Right cardiac atrium (tissue), 5 donors: ENCODE measurements at regions of chr3 and their contacts with region 1.

Region 1: GRCh38 chr3:30606301-30607031 is at the start of gene TGFBR2:
- DNase-seq: peak; percentile 97 to 98 (median 98)
- ATAC-seq: peak; percentile 98
- H3K4me3 ChIP-seq: peak within 1 kb of the TSS; percentile 94
- H3K27ac ChIP-seq: peak within 1 kb of the TSS; percentile 98
- H3K4me1 ChIP-seq: peaks cover 5% of the 10 kb centered on the region
- H3K27me3 ChIP-seq: no peaks in the 10 kb centered on the region
- total RNA-seq, gene TGFBR2: 196 to 255 (median 212) TPM

Region 2: DNA sequence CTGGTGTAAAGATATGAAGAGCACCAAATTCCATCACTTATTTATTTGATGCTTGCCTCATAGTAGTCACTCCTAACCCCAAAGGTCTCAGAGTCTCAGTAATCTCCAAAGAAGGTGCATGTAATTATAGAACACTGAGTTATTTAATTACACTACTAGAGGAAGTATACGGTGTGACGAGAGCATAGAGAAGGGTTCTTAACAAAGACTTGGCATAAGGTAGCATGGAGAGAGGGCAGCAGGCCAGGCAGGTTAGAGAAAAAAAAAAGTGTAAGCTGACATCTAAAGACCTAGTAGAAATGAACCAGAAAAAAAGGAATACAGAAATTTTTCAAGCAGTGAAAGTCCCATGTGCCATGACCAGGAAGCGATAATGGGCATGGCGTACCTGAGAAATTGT is 213.4 kb before region 1 on chr3:
- intact Hi-C with region 1: no loop called
- DNase-seq: no peak
- ATAC-seq: no peak
- H3K4me3 ChIP-seq: no peak overlapping the region
- H3K27ac ChIP-seq: no peak overlapping the region
- H3K4me1 ChIP-seq: peaks cover under 1% of the 10 kb centered on the region
- H3K27me3 ChIP-seq: no peaks in the 10 kb centered on the region

Region 3: GRCh38 chr3:30538787-30539186 is 67.7 kb before region 1 on chr3:
- intact Hi-C with region 1: loop called in 1 of 4 experiments (anchors 10 kb)
- DNase-seq: no peak
- ATAC-seq: no peak
- H3K4me3 ChIP-seq: no peak overlapping the region
- H3K27ac ChIP-seq: no peak overlapping the region
- H3K4me1 ChIP-seq: no peaks in the 10 kb centered on the region
- H3K27me3 ChIP-seq: no peaks in the 10 kb centered on the region

Region 4: DNA sequence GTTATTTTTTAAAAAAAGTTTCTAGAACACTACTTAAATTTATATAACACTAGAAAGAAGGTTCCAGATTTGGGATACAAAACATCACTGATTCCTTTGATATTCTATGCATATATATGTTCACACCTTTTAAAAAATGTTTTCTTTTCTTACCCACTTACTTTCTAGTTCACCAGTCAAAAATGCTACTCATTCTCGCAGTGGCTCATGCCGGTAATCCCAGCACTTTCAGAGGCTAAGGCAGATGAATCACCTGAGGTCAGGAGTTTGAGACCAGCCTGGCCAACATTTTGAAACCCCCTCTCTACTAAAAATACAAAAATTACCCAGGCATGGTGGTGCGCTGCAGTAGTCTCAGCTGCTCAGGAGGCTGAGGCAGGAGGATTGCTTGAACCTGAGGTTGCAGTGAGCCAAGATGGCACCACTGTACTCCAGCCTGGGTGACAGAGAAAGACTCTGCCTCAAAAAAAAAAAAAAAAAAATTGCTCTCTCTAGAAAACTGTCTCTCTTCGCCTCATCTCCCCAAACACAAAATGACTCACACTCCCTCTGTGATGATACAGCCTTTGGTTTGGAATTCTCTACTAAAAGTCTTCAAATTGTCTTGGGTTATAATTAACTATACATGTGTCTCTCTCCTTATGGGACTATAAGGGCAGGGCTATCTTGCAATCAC is 52.7 kb before region 1 on chr3:
- intact Hi-C with region 1: loop called in 1 of 4 experiments (anchors 5 kb)
- DNase-seq: no peak
- ATAC-seq: no peak
- H3K4me3 ChIP-seq: no peak overlapping the region
- H3K27ac ChIP-seq: no peak overlapping the region
- H3K4me1 ChIP-seq: peaks cover 3% of the 10 kb centered on the region
- H3K27me3 ChIP-seq: no peaks in the 10 kb centered on the region